ACHN (cell line): ENCODE measurements at regions of chr12 and their contacts with region 1.

Region 1: DNA sequence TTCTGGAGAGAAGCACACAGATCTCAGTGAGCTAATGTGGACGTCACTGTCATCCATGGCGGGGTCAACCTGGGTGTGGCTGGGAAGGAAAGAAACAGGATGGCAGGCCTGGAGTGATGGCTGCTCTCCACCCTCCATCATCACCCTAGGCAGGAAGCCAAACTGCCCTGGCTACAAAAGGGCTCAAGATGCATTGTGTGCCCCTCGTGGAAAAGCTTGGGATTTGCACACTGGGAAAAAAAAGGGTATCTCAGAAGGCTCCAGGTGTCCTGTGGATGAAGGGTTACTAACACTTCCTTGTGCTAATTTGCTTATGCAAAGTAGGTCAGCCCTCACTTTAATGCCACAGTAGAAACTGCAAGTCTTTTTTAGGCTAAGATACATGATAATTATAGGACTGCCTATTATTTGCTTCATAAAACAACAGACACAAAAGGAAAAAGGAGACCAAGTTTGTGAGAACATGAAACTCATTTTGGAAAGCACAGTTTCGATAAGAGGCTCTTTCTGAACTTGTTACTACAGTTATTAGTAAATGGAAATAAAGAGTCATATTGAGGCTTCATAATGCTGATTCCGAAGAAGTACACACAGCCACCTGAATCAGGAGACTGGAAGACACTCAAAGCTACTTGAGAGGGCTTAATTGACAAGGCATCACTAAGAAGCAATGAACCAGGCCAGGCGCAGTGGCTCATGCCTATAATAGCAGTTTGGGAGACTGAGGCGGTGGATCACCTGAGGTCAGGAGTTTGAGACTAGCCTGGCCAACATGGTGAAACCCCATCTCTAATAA is 18.9 kb downstream of the RFC5 start:
- DNase-seq: peak; percentile 77

Region 2: DNA sequence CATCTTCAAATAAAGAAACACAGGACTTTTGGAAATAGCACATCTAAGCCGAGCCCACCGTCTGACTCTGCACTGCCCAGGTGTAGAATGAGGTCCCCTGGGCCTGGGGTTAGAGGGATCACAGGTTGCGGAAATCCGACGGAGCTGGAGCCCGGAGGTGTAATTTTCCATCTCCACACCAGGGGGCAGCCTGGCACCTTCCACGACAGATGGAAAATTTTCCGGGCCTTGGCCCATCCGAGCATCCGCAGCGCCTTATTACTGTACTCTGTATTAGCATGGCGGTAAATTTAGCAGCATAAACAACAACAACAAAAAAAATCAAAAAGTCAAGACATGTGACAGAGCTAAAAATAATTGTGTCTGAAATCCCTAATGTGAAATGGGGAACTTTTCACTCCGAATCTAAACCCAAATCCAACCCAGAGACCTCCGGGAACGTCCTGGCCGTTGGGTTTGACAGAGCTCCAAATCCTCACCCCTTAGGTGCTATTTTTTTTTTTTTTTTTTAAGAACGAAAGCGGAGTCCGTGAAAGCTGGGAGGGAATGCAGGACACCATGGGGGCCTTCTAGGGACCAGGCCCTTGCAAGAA is 160.5 kb before region 1 on chr12:
- in situ Hi-C with region 1: loop called (anchors 25 kb)
- DNase-seq: peak; percentile 77

Region 3: DNA sequence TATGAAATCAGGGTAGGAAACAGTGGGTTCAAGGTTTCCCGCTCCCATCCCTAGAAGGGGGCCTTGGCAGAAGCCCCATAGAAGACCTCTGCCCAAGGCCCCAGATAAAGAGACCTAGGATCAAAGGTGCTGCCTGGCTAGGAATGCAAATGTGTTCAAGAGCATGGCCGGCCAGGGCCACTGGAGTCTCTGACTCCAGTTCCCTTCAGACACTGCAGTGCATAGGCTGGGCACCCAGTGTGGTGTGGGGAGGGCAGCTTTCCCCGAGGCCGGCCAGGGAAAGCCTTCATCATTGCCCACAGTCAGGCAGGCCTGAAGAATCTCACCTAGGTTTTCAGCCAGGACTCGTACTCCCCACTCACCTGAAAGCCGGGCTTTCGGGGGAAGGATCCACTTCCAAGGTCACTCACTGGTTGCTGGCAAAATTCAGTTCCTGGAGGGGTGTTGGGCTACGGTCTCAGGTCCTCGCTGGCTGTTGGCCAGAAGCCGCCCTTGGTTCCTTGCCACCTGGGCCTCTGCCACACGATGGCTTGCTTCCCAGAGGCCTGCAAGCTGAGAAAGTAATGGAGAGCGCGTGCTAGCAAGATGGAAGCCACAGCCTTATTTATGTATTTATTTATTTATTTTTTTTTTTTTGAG is 90.8 kb after region 1 on chr12:
- in situ Hi-C with region 1: no loop called
- DNase-seq: no peak